ENCODE measurements at regions of chr12 and their contacts with region 1.

Region 1: GRCh38 chr12:77925536-77926108 is 94.9 kb downstream of the NAV3 start:
- DNase-seq: peak in 1 of 2 donors; percentile 90
- H3K4me3 ChIP-seq: peak overlapping the region in 1 of 2 donors; percentile 14
- H3K27ac ChIP-seq: no peak overlapping the region
- H3K4me1 ChIP-seq: peaks cover 11% of the 10 kb centered on the region
- H3K27me3 ChIP-seq: no peaks in the 10 kb centered on the region
- CTCF ChIP-seq: peak; percentile 71 to 85 (median 82)
- POLR2A ChIP-seq: no peak

Region 2: GRCh38 chr12:77724367-77724957 is 201.2 kb before region 1 on chr12:
- intact Hi-C with region 1: loop called (anchors 10 kb)
- DNase-seq: no peak
- H3K4me3 ChIP-seq: no peak overlapping the region
- H3K27ac ChIP-seq: no peak overlapping the region
- H3K4me1 ChIP-seq: no peaks in the 10 kb centered on the region
- H3K27me3 ChIP-seq: no peaks in the 10 kb centered on the region
- CTCF ChIP-seq: peak in 2 of 3 experiments; percentile 57 to 67
- POLR2A ChIP-seq: no peak

Region 3: GRCh38 chr12:78096909-78097597 is 171.4 kb after region 1 on chr12:
- intact Hi-C with region 1: no loop called
- DNase-seq: no peak
- H3K4me3 ChIP-seq: no peak overlapping the region
- H3K27ac ChIP-seq: no peak overlapping the region
- H3K4me1 ChIP-seq: peaks cover 10% of the 10 kb centered on the region
- H3K27me3 ChIP-seq: no peaks in the 10 kb centered on the region
- CTCF ChIP-seq: no peak
- POLR2A ChIP-seq: no peak

Measured in vagina (tissue), 2 donors.